Activated B cell treated with CpG ODN at 0.5 μM for 24 hours (primary cell): ENCODE measurements at regions of chr15 and their contacts with region 1.

Region 1: GRCh38 chr15:89416141-89416853 is 80.1 kb downstream of the RHCG start:
- DNase-seq: peak; percentile 63
- ATAC-seq: peak; percentile 92
- H3K4me3 Mint-ChIP-seq: no peak overlapping the region
- H3K27ac Mint-ChIP-seq: no peak overlapping the region
- H3K4me1 Mint-ChIP-seq: peaks cover 13% of the 10 kb centered on the region
- H3K27me3 Mint-ChIP-seq: peaks cover 76% of the 10 kb centered on the region
- CTCF ChIP-seq: peak; percentile 84

Region 2: GRCh38 chr15:89299896-89300295 is 116.4 kb before region 1 on chr15:
- CTCF ChIA-PET with region 1: no interaction called
- POLR2A ChIA-PET with region 1: no interaction called
- intact Hi-C with region 1: no loop called
- DNase-seq: no peak
- ATAC-seq: no peak
- H3K4me3 Mint-ChIP-seq: no peak overlapping the region
- H3K27ac Mint-ChIP-seq: no peak overlapping the region
- H3K4me1 Mint-ChIP-seq: no peaks in the 10 kb centered on the region
- H3K27me3 Mint-ChIP-seq: no peaks in the 10 kb centered on the region
- CTCF ChIP-seq: no peak

Region 3: GRCh38 chr15:89430530-89431341 is 14.4 kb after region 1 on chr15:
- CTCF ChIA-PET with region 1: interaction called, 12 read pairs
- POLR2A ChIA-PET with region 1: interaction called, 3 read pairs
- intact Hi-C with region 1: loop called (anchors 1 kb)
- DNase-seq: peak; percentile 94
- ATAC-seq: peak; percentile 99
- H3K4me3 Mint-ChIP-seq: peak overlapping the region; percentile 85
- H3K27ac Mint-ChIP-seq: peak overlapping the region; percentile 38
- H3K4me1 Mint-ChIP-seq: peaks cover 4% of the 10 kb centered on the region
- H3K27me3 Mint-ChIP-seq: peaks cover 10% of the 10 kb centered on the region
- CTCF ChIP-seq: peak; percentile 81

Region 4: DNA sequence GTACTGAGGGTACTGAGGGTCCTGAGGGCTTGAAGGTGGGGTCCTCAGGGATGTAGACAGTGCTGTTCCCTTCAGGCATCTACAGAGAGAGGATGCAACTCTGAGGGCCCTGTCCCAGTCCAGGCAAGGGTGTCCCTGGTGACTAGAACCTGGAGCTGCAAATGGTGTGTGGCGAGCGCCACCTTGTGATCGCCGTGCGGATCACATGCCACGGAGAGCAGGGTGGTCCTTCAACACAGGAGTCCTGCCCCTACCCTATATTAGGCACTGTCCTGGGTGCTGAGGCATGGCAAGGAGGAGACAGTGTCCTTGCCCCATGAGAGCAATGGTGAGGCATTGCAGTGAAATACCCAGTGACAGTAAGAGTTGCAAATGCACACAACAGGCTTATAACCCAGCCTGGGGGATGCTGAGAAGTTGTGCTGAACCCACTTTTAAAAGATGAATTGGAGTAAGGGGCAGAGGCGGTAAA is 56.5 kb after region 1 on chr15:
- CTCF ChIA-PET with region 1: interaction called, 16 read pairs
- POLR2A ChIA-PET with region 1: no interaction called
- intact Hi-C with region 1: loop called (anchors 1 kb)
- DNase-seq: peak; percentile 62
- ATAC-seq: peak; percentile 86
- H3K4me3 Mint-ChIP-seq: no peak overlapping the region
- H3K27ac Mint-ChIP-seq: no peak overlapping the region
- H3K4me1 Mint-ChIP-seq: no peaks in the 10 kb centered on the region
- H3K27me3 Mint-ChIP-seq: peaks cover 30% of the 10 kb centered on the region
- CTCF ChIP-seq: no peak